PC-9 (cell line): ENCODE measurements at regions of chr20 and their contacts with region 1.

Region 1: DNA sequence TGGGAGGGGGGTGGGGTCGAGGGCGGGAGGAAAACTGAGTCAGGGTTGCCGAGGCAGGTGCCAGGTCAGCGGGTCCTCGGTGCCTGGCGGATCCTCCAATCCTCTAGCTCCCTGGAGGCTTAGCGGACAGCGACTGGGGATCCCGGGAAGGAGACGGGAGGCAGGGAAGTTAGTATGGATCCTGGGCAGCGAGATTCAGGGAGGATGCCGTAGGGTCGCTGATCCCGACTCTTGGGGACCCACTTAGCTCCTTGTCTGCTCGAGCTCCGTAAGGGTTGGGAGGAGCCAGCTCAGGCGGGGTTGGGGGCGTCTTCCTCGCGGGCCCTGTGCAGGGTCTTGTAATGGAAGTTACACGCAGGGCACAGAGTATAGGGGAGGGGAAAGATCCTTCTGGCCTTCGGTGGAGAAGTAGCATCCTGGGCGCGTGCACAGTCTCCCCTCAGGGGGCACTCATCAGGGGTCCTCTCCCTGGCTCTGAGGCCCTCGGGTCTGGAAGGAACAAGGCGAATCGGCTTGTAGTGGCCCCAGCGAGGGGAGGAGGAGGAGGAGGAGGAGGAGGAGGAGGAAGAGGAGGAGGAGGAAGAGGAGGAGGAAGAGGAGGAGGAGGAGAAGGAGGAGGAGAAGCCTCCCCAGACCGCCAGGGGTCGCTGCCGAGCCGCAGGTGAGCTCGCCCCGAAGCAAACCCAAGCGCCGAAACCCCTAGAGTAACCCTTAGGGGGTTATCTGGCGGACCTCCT is 6.4 kb upstream of the SLC12A5 start:
- DNase-seq: peak in 1 of 2 experiments; percentile 69
- H3K4me3 ChIP-seq: peak overlapping the region; percentile 60
- H3K27ac ChIP-seq: no peak overlapping the region
- H3K4me1 ChIP-seq: no peaks in the 10 kb centered on the region
- H3K27me3 ChIP-seq: no peaks in the 10 kb centered on the region
- CTCF ChIP-seq: peak; percentile 96

Region 2: GRCh38 chr20:46089417-46090388 is 67.1 kb after region 1 on chr20 and contains the start of gene NCOA5:
- CTCF ChIA-PET with region 1: no interaction called
- POLR2A ChIA-PET with region 1: no interaction called
- intact Hi-C with region 1: loop called (anchors 5 kb)
- DNase-seq: peak; percentile 86 to 97
- H3K4me3 ChIP-seq: peak within 1 kb of the TSS; percentile 85
- H3K27ac ChIP-seq: peak within 1 kb of the TSS; percentile 83
- H3K4me1 ChIP-seq: peaks cover 43% of the 10 kb centered on the region
- H3K27me3 ChIP-seq: no peaks in the 10 kb centered on the region
- CTCF ChIP-seq: no peak; the same call in 1 of the 2 replicates
- total RNA-seq, gene NCOA5: 15.8 and 28.1 TPM in 2 replicates

Region 3: GRCh38 chr20:46132705-46133120 is 110.1 kb after region 1 on chr20:
- CTCF ChIA-PET with region 1: interaction called, 12 read pairs
- POLR2A ChIA-PET with region 1: no interaction called
- intact Hi-C with region 1: no loop called
- DNase-seq: peak in 1 of 2 experiments; percentile 72
- H3K4me3 ChIP-seq: no peak overlapping the region
- H3K27ac ChIP-seq: no peak overlapping the region
- H3K4me1 ChIP-seq: peaks cover 3% of the 10 kb centered on the region
- H3K27me3 ChIP-seq: peaks cover 90% of the 10 kb centered on the region
- CTCF ChIP-seq: peak; percentile 90

Region 4: DNA sequence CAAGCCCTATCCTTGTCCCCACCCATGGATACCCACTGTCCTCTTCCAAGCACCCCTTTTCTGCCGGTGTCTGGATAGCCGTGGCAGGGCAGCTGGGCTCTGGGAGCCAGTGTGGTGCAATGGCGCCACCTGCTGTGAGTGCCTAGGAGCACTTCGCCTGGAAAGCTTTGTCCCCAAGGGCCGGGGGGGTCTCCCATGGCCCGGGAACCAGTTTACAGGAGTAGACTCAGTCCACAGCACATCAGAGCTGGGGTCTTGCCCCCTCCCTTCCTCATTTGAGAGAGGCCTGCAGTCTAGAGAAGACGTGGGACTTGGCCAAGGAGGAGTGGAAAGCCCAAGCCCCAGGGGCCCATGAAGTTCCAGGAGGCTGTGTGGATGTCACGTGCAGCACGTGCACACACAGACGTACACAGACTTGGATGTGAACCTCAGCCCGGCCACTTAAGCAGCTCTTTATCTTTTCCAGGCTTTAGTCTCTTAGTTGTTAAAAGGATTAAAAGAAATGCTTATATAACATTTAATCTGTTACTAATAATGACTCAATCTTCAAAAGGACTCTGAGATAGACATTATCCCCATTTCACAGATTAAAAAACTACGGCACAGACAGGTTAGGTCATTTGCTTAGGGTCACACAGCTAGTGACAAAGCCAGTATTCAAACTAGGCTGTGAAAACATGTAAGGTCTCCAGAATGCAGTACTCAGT is 326.6 kb after region 1 on chr20:
- CTCF ChIA-PET with region 1: no interaction called
- POLR2A ChIA-PET with region 1: no interaction called
- intact Hi-C with region 1: loop called (anchors 1 kb)
- DNase-seq: peak in 1 of 2 experiments; percentile 46
- H3K4me3 ChIP-seq: no peak overlapping the region
- H3K27ac ChIP-seq: no peak overlapping the region
- H3K4me1 ChIP-seq: no peaks in the 10 kb centered on the region; the same call in 1 of the 2 replicates
- H3K27me3 ChIP-seq: no peaks in the 10 kb centered on the region
- CTCF ChIP-seq: peak; percentile 77

Region 5: DNA sequence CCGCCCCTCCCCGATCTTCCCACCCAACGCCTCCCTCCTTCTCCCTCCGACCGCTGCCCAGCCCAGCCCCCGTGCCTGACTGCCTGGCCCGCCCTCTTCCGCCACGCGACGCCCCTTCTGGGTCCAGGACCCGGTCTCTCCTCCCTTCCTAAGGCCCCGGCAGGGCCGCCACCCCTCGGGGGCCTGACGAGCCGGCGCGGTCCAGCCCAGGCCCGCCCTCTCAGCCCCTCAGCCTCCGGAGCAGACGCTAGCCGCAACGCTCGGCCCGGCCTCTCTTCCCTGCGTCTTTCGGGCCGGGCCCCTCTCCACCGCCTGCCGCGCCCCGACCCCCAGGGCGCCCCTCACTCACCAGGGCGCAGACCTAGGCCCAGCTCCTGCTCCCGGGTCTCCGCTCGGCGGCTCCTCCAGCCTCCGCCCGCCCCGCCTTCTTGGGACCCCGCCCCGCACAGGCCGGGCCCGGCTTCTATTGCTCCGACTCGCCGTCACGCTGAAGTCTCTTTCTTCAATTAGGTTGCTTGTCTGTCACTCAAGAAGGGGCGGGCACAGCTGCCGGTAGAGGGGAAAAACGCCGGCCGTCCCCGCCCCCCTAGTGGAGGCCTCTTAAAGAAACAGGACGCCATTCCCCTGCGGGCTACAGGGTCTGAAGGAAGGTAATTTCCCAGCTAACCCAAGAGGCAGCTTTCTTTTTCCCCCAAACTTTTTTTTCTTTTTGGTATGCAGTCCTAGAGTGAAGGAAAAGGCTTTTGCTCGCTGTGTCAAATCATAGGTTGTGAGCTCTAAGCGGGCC is 383.8 kb after region 1 on chr20 and contains the start of gene ELMO2:
- CTCF ChIA-PET with region 1: no interaction called
- POLR2A ChIA-PET with region 1: no interaction called
- intact Hi-C with region 1: loop called (anchors 1 kb)
- DNase-seq: peak; percentile 93 to 96
- H3K4me3 ChIP-seq: peak within 1 kb of the TSS; percentile 93
- H3K27ac ChIP-seq: no peak within 1 kb of the TSS
- H3K4me1 ChIP-seq: peaks cover 29% of the 10 kb centered on the region
- H3K27me3 ChIP-seq: no peaks in the 10 kb centered on the region
- CTCF ChIP-seq: peak; percentile 49
- total RNA-seq, gene ELMO2: 29.4 and 32.1 TPM in 2 replicates

Region 6: GRCh38 chr20:46411637-46412036 is 389.1 kb after region 1 on chr20:
- CTCF ChIA-PET with region 1: no interaction called
- POLR2A ChIA-PET with region 1: no interaction called
- intact Hi-C with region 1: loop called (anchors 1 kb)
- DNase-seq: no peak
- H3K4me3 ChIP-seq: no peak overlapping the region
- H3K27ac ChIP-seq: no peak overlapping the region
- H3K4me1 ChIP-seq: peaks cover 19% of the 10 kb centered on the region
- H3K27me3 ChIP-seq: peaks cover 48% of the 10 kb centered on the region
- CTCF ChIP-seq: no peak

Region 7: GRCh38 chr20:46438156-46438750 is 415.7 kb after region 1 on chr20:
- CTCF ChIA-PET with region 1: no interaction called
- POLR2A ChIA-PET with region 1: no interaction called
- intact Hi-C with region 1: loop called (anchors 1 kb)
- DNase-seq: peak; percentile 29 to 53
- H3K4me3 ChIP-seq: no peak overlapping the region
- H3K27ac ChIP-seq: no peak overlapping the region
- H3K4me1 ChIP-seq: no peaks in the 10 kb centered on the region
- H3K27me3 ChIP-seq: peaks cover 88% of the 10 kb centered on the region
- CTCF ChIP-seq: peak; percentile 62

Region 8: GRCh38 chr20:47720636-47721427 is 1698.3 kb after region 1 on chr20:
- CTCF ChIA-PET with region 1: no interaction called
- POLR2A ChIA-PET with region 1: no interaction called
- intact Hi-C with region 1: no loop called
- DNase-seq: no peak
- H3K4me3 ChIP-seq: no peak overlapping the region
- H3K27ac ChIP-seq: no peak overlapping the region
- H3K4me1 ChIP-seq: 0 out of 2 replicates have a peak, but pooled peaks cover 4% of the 10 kb centered on the region
- H3K27me3 ChIP-seq: no peaks in the 10 kb centered on the region
- CTCF ChIP-seq: no peak